Caco-2 (cell line): ENCODE measurements at regions of chr4 and their contacts with region 1.

Region 1: GRCh38 chr4:62644372-62644771 is 1444.2 kb downstream of the ADGRL3 start:
- DNase-seq: peak in 1 of 2 experiments; percentile 19
- H3K4me3 ChIP-seq: no peak overlapping the region
- H3K4me3 Mint-ChIP-seq: no peak overlapping the region
- H3K27ac Mint-ChIP-seq: no peak overlapping the region
- H3K4me1 ChIP-seq: no peaks in the 10 kb centered on the region
- H3K4me1 Mint-ChIP-seq: no peaks in the 10 kb centered on the region
- H3K27me3 ChIP-seq: no peaks in the 10 kb centered on the region
- H3K27me3 Mint-ChIP-seq: peaks cover 2% of the 10 kb centered on the region
- CTCF ChIP-seq: peak in 1 of 2 experiments; percentile 30

Region 2: DNA sequence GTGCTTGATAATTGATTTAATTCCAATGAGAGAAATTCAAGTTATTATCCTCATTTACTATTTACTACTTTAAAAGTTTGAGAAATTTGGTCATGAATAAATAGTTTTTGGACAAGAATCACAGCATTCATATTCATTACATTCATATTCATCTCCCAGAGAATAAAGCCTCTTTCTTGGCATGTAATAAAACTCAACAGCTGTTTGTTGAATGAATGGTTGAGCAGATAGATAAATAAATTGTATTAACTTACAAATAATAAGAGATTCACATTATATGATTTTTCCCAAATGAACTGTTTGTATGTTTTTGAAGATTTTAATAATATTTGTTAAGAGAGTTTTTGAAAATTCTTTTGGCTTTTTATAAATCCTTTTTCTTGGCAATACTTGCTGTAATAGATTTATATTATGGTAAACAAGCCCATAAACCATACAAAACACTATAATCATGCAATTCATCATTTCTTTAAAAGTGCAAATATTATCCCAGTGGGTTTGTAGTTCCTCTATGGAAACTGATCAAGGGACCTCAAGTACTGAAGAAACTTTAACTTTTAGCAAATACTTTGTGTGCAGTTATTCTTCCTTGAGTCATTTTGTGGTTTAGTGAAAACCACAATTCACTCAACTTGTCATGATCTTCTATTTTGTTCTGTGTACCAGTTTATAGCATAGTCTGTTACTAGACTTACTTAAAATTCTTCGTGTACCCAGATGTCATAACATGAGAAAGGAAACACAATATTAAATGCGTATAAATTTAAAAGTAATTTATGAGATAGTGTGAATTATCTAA is 1072.4 kb before region 1 on chr4:
- CTCF ChIA-PET with region 1: no interaction called
- POLR2A ChIA-PET with region 1: no interaction called
- intact Hi-C with region 1: no loop called
- DNase-seq: no peak
- H3K4me3 ChIP-seq: no peak overlapping the region
- H3K4me3 Mint-ChIP-seq: no peak overlapping the region
- H3K27ac Mint-ChIP-seq: no peak overlapping the region
- H3K4me1 ChIP-seq: no peaks in the 10 kb centered on the region
- H3K4me1 Mint-ChIP-seq: no peaks in the 10 kb centered on the region
- H3K27me3 ChIP-seq: no peaks in the 10 kb centered on the region
- H3K27me3 Mint-ChIP-seq: no peaks in the 10 kb centered on the region
- CTCF ChIP-seq: no peak

Region 3: DNA sequence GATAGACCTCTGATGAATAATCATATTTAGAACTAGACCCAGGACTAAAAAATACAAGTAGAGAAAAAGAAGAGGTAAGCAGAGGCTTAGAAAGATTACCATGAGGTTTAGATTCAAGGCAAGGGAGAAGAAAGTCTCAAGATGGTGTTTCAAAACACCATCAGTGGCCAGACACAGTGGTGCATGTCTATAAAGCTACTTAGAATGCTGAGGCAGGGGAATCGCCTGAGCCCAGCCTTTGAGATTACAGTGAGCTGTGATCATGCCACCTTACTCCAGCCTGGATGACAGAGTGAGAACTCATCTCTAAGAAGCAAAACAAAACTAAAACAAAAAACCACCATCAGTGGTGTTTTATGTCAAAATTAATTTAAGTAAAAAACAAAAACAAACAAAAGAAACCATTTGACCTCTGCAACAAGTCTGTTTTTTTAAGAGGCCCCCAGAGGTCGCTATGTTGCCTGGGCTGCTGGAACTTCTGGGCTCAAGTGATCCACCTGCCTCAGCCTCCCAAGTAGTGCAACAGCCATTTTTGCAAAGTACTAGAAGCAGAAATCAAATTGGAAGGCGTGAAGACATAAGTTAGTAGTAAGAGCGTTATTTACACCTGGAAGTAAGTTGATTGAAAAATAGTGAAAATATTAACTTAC is 660.0 kb before region 1 on chr4:
- CTCF ChIA-PET with region 1: no interaction called
- POLR2A ChIA-PET with region 1: no interaction called
- intact Hi-C with region 1: loop called (anchors 1 kb)
- DNase-seq: peak in 1 of 2 experiments; percentile 3
- H3K4me3 ChIP-seq: no peak overlapping the region
- H3K4me3 Mint-ChIP-seq: no peak overlapping the region
- H3K27ac Mint-ChIP-seq: no peak overlapping the region
- H3K4me1 ChIP-seq: no peaks in the 10 kb centered on the region
- H3K4me1 Mint-ChIP-seq: no peaks in the 10 kb centered on the region
- H3K27me3 ChIP-seq: no peaks in the 10 kb centered on the region
- H3K27me3 Mint-ChIP-seq: peaks cover 3% of the 10 kb centered on the region
- CTCF ChIP-seq: peak in 1 of 2 experiments; percentile 12

Region 4: DNA sequence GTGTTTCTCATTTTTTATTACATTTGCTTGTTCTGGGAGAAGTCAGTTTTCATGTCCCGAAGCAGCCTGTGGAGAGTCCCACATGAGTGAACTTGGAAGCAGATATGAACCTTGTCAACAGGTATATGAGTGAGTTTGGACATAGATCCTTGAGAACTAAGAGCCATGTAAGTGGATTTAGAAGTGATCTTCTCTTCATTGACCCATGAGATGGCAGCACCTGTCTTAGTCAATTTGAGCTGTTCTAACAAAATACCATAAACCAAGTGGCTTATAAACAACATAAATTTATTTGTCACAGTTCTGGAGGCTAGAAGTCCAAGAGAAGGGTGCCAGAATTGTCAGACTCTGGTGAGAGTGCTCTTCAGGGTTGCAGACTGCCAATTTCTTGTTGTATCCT is 400.5 kb before region 1 on chr4:
- CTCF ChIA-PET with region 1: no interaction called
- POLR2A ChIA-PET with region 1: no interaction called
- intact Hi-C with region 1: loop called (anchors 5 kb)
- DNase-seq: no peak
- H3K4me3 ChIP-seq: no peak overlapping the region
- H3K4me3 Mint-ChIP-seq: no peak overlapping the region
- H3K27ac Mint-ChIP-seq: no peak overlapping the region
- H3K4me1 ChIP-seq: no peaks in the 10 kb centered on the region
- H3K4me1 Mint-ChIP-seq: no peaks in the 10 kb centered on the region
- H3K27me3 ChIP-seq: no peaks in the 10 kb centered on the region
- H3K27me3 Mint-ChIP-seq: no peaks in the 10 kb centered on the region
- CTCF ChIP-seq: no peak

Region 5: DNA sequence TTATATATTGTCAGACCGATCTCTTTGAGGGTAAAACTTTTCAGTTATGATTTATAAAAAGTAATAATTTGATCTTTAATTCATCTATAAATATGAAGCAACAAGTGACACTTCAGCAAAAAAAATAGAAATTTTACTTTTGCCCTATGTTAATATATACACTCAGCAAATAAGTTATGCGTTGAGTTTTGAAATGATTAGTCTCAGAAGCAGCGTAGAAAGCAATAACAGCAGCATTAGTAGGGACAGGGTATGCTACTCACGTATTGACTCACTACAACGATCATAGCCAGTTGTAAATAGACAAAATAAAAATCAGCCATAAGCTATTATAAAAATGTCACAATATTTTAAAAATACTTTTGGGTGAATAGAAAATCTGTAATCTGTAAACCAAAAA is 215.1 kb before region 1 on chr4:
- CTCF ChIA-PET with region 1: no interaction called
- POLR2A ChIA-PET with region 1: no interaction called
- intact Hi-C with region 1: loop called (anchors 1 kb)
- DNase-seq: no peak
- H3K4me3 ChIP-seq: no peak overlapping the region
- H3K4me3 Mint-ChIP-seq: no peak overlapping the region
- H3K27ac Mint-ChIP-seq: no peak overlapping the region
- H3K4me1 ChIP-seq: no peaks in the 10 kb centered on the region
- H3K4me1 Mint-ChIP-seq: no peaks in the 10 kb centered on the region
- H3K27me3 ChIP-seq: no peaks in the 10 kb centered on the region
- H3K27me3 Mint-ChIP-seq: no peaks in the 10 kb centered on the region
- CTCF ChIP-seq: no peak

Region 6: GRCh38 chr4:62449538-62449937 is 194.8 kb before region 1 on chr4:
- CTCF ChIA-PET with region 1: no interaction called
- POLR2A ChIA-PET with region 1: no interaction called
- intact Hi-C with region 1: loop called (anchors 2 kb)
- DNase-seq: no peak
- H3K4me3 ChIP-seq: no peak overlapping the region
- H3K4me3 Mint-ChIP-seq: no peak overlapping the region
- H3K27ac Mint-ChIP-seq: no peak overlapping the region
- H3K4me1 ChIP-seq: no peaks in the 10 kb centered on the region
- H3K4me1 Mint-ChIP-seq: no peaks in the 10 kb centered on the region
- H3K27me3 ChIP-seq: no peaks in the 10 kb centered on the region
- H3K27me3 Mint-ChIP-seq: no peaks in the 10 kb centered on the region
- CTCF ChIP-seq: no peak

Region 7: GRCh38 chr4:62591756-62592155 is 52.6 kb before region 1 on chr4:
- CTCF ChIA-PET with region 1: no interaction called
- POLR2A ChIA-PET with region 1: no interaction called
- intact Hi-C with region 1: loop called (anchors 1 kb)
- DNase-seq: no peak
- H3K4me3 ChIP-seq: no peak overlapping the region
- H3K4me3 Mint-ChIP-seq: no peak overlapping the region
- H3K27ac Mint-ChIP-seq: no peak overlapping the region
- H3K4me1 ChIP-seq: no peaks in the 10 kb centered on the region
- H3K4me1 Mint-ChIP-seq: no peaks in the 10 kb centered on the region
- H3K27me3 ChIP-seq: no peaks in the 10 kb centered on the region
- H3K27me3 Mint-ChIP-seq: no peaks in the 10 kb centered on the region
- CTCF ChIP-seq: no peak